Activated CD4-positive, alpha-beta T cell treated with anti-CD3 and anti-CD28 coated beads, Interleukin-2, amount 10 ng/mL, durations not matched to agents 24 days and 14 days (primary cell): ENCODE measurements at regions of chr2 and their contacts with region 1.

Region 1: GRCh38 chr2:110211938-110212858 is at the start of gene MTLN:
- DNase-seq: peak; percentile 93
- H3K4me3 Mint-ChIP-seq: peak within 1 kb of the TSS; percentile 92
- H3K27ac Mint-ChIP-seq: peak within 1 kb of the TSS; percentile 91
- H3K4me1 Mint-ChIP-seq: peaks cover 8% of the 10 kb centered on the region
- H3K27me3 Mint-ChIP-seq: peaks cover 22% of the 10 kb centered on the region
- total RNA-seq, gene MTLN: 71.9 and 80.1 TPM in 2 replicates

Region 2: DNA sequence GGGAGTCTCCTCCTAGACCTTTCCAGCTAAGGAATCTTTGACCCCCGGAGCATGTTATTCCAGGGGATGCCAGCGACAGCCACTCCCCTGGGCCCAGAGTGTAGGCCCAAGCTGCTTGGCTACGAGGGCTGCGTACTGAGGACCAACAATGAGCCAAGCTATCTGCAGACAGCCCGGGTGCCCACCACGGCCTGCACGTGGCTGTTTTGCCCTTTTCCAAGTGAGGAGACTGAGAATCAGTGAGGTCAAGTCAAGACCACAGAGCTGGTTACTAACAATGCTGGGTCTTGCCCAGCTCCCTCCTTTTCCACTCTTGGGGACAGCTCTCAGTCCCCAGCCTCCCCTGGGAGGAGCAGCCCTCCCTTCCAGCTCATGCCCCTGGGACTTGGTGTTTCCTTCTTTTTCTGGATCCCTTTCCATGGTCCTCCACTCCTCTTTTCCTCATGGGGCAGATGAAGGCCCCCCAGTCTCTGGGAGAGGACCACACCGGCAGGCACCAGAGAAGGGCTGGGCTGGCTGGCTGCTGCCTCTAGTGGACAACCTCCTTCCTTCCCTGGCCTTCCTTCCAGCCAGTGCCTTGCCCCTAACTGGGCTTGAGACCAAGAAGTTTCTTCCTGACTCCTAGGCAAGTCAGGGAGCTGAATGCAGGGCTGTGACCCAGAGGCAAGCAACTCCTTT is 96.0 kb before region 1 on chr2:
- intact Hi-C with region 1: loop called (anchors 10 kb)
- DNase-seq: peak; percentile 53
- H3K4me3 Mint-ChIP-seq: no peak overlapping the region
- H3K27ac Mint-ChIP-seq: no peak overlapping the region
- H3K4me1 Mint-ChIP-seq: peaks cover 11% of the 10 kb centered on the region
- H3K27me3 Mint-ChIP-seq: peaks cover 42% of the 10 kb centered on the region

Region 3: DNA sequence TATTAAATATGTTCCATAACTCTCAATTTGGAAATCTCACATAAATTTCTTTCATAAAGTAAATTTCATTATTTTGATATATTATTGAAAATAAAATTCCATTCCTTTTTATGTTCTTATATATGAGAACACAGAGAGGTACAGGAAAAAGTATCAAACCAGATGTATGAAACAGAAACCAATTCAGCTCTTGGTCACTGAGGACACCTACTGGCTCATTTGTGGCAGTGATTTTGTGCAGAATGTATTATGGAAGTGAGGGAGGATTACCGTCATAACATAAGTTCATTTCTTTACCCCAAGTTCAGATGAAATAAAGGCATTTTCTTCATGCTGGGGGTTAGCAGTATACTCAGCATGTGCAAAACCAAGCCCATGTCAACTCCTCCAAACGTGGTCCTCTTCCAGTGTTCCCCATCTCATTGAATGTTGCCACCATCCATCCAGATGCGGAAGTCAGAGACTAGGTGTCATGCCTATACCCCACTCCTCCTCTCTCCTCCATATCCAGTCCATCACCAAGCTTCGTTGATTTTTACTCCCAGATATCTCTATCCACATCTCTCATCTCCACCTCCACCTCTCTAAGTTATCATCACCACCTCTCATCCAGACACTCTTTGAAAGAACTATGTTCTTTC is 54.9 kb before region 1 on chr2:
- intact Hi-C with region 1: loop called (anchors 2 kb)
- DNase-seq: peak; percentile 78
- H3K4me3 Mint-ChIP-seq: no peak overlapping the region
- H3K27ac Mint-ChIP-seq: no peak overlapping the region
- H3K4me1 Mint-ChIP-seq: peaks cover 20% of the 10 kb centered on the region
- H3K27me3 Mint-ChIP-seq: peaks cover 13% of the 10 kb centered on the region

Region 4: DNA sequence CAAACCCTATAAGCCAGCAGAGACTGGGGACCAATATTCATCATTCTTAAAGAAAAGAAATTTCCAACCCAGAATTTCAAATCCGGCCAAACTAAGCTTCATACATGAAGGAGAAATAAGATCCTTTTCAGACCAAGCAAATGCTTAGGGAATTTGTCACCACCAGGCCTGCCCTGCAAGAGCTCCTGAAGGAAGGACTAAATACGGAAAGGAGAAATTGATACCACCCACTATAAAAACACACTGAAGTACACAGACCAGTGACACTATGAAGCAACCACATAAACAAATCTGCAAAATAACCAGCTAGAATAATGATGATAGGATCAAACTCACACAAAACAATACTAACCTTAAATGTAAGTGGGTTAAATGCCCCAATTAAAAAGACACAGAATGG is 29.7 kb before region 1 on chr2:
- intact Hi-C with region 1: no loop called
- DNase-seq: no peak
- H3K4me3 Mint-ChIP-seq: no peak overlapping the region
- H3K27ac Mint-ChIP-seq: no peak overlapping the region
- H3K4me1 Mint-ChIP-seq: no peaks in the 10 kb centered on the region
- H3K27me3 Mint-ChIP-seq: peaks cover 23% of the 10 kb centered on the region